ENCODE measurements at regions of chr3 and their contacts with region 1.

Region 1: GRCh38 chr3:183884427-183885296 is at the start of gene PARL:
- DNase-seq: peak; percentile 98
- H3K4me3 Mint-ChIP-seq: peak within 1 kb of the TSS; percentile 92
- H3K27ac Mint-ChIP-seq: peak within 1 kb of the TSS; percentile 86
- H3K4me1 Mint-ChIP-seq: peaks cover 31% of the 10 kb centered on the region
- H3K27me3 Mint-ChIP-seq: no peaks in the 10 kb centered on the region
- total RNA-seq, gene PARL: 77.1 to 84.1 TPM

Region 2: DNA sequence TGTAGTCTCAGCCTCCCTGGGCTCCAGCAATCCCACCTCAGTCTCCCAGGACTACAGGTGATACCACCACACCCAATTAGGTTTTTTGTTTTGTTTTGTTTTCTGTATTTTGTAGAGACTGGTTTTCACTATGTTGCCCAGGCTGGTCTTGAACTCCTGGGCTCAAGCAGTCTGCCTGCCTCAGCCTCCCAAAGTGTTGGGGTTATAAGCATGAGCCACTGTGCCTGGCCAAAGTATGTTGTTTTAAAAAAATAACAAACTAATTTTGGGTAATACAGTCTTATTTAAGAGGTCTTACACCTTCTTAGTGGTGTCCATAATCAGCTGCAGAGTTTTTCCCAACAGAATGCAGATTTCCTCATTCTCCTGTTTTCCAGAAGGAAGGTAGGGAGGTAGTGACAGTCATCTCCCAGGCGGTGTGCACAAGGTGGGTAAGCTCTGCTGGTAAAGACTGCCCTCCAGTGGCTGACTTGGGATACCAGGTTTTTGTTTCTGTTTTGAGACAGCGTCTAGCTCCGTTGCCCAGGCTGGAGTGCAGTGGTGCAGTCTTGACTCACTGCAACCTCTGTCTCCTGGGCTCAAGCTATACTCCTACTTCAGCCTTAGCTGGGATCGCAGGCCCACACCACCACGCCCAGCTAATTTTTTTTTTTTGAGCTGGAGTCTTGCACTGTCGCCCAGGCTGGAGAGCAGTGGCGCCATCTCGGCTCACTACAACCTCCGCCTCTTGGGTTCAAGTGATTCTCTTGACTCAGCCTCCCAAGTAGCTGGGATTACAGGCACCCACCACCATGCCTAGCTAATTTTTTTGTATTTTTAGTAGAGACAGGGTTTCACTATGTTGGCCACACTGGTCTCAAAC is 117.7 kb before region 1 on chr3:
- CTCF ChIA-PET with region 1: interaction called, 11 read pairs
- POLR2A ChIA-PET with region 1: no interaction called
- intact Hi-C with region 1: loop called (anchors 5 kb)
- DNase-seq: peak; percentile 81
- H3K4me3 Mint-ChIP-seq: no peak overlapping the region
- H3K27ac Mint-ChIP-seq: no peak overlapping the region
- H3K4me1 Mint-ChIP-seq: peaks cover 5% of the 10 kb centered on the region
- H3K27me3 Mint-ChIP-seq: no peaks in the 10 kb centered on the region

Region 3: DNA sequence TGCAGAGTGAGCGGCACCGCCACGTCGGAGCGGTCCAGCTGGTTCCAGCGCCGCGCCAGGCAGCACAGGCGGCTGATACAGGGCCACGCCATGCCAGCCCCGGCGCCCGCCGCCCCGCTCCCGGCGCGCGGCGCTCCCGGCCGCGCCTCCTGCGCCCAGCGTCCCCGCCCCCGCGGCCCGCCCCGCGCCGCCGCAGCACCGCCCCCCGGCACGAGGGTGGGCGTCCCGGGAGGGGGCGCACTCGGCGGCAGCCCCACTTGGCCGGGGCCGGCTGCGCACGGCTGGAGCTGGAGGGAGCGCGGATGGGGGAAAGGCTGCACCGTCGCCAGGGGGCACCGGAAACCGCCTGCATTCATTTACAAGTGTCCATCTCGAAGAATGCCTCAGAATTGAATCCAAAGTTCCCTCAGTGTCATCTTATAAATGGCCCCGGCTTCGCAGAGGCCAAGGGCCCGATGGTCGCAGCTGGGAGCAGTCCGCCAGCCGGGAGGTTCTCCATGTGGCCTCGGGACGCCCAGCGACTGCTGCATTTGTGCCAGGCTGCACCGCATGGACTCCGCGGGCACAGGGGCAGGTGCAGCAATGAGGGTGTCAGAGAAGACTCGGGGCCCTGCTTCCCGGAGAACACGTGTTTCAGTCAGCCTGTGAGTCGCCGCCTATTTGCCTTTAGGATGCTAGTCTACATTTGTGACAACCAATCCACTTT is 59.1 kb before region 1 on chr3 and contains the start of gene MAP6D1:
- CTCF ChIA-PET with region 1: interaction called, 11 read pairs
- POLR2A ChIA-PET with region 1: no interaction called
- intact Hi-C with region 1: loop called (anchors 5 kb)
- DNase-seq: peak; percentile 56
- H3K4me3 Mint-ChIP-seq: peak within 1 kb of the TSS; percentile 68
- H3K27ac Mint-ChIP-seq: no peak within 1 kb of the TSS
- H3K4me1 Mint-ChIP-seq: peaks cover 12% of the 10 kb centered on the region
- H3K27me3 Mint-ChIP-seq: peaks cover 4% of the 10 kb centered on the region
- total RNA-seq, gene MAP6D1: 0.70 to 1.00 TPM

Region 4: DNA sequence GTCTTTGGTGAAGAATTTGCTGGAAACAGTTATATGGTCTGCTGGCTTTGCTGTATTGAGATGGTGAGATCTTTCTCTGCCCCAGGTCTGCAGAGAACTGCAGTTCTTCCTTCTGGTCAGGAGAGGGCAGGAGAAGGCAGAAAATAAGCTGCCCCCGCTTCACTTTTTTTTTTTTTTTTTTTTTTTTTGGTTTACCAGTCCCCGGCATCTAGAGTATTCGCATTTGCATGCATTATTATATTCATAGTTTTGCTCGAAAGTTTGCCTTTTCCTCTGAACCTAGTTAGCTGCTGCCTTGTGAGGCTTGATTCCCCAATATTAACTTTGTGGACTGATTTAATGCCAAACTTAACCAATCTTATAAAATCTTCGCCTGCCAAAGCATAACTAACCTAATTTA is 10.6 kb after region 1 on chr3:
- CTCF ChIA-PET with region 1: interaction called, 43 read pairs
- POLR2A ChIA-PET with region 1: interaction called, 3 read pairs
- intact Hi-C with region 1: no loop called
- DNase-seq: peak; percentile 41
- H3K4me3 Mint-ChIP-seq: no peak overlapping the region
- H3K27ac Mint-ChIP-seq: no peak overlapping the region
- H3K4me1 Mint-ChIP-seq: no peaks in the 10 kb centered on the region
- H3K27me3 Mint-ChIP-seq: peaks cover 15% of the 10 kb centered on the region

Region 5: GRCh38 chr3:184017672-184018423 is 133.2 kb after region 1 on chr3 and contains the start of gene ABCC5:
- CTCF ChIA-PET with region 1: interaction called, 6 read pairs
- POLR2A ChIA-PET with region 1: no interaction called
- intact Hi-C with region 1: loop called (anchors 5 kb)
- DNase-seq: peak; percentile 89
- H3K4me3 Mint-ChIP-seq: peak within 1 kb of the TSS; percentile 99
- H3K27ac Mint-ChIP-seq: peak within 1 kb of the TSS; percentile 85
- H3K4me1 Mint-ChIP-seq: peaks cover 23% of the 10 kb centered on the region
- H3K27me3 Mint-ChIP-seq: peaks cover 5% of the 10 kb centered on the region
- total RNA-seq, gene ABCC5: 13.3 to 15.6 TPM

Region 6: GRCh38 chr3:184525337-184526087 is 640.9 kb after region 1 on chr3:
- CTCF ChIA-PET with region 1: no interaction called
- POLR2A ChIA-PET with region 1: no interaction called
- intact Hi-C with region 1: no loop called
- DNase-seq: peak; percentile 31
- H3K4me3 Mint-ChIP-seq: peak overlapping the region; percentile 81
- H3K27ac Mint-ChIP-seq: peak overlapping the region; percentile 28
- H3K4me1 Mint-ChIP-seq: peaks cover 18% of the 10 kb centered on the region
- H3K27me3 Mint-ChIP-seq: peaks cover 23% of the 10 kb centered on the region

Measured in activated CD4-positive, alpha-beta memory T cell treated with anti-CD3 and anti-CD28 coated beads for 36 hours (primary cell).